ENCODE measurements at regions of chr19 and their contacts with region 1.

Region 1: DNA sequence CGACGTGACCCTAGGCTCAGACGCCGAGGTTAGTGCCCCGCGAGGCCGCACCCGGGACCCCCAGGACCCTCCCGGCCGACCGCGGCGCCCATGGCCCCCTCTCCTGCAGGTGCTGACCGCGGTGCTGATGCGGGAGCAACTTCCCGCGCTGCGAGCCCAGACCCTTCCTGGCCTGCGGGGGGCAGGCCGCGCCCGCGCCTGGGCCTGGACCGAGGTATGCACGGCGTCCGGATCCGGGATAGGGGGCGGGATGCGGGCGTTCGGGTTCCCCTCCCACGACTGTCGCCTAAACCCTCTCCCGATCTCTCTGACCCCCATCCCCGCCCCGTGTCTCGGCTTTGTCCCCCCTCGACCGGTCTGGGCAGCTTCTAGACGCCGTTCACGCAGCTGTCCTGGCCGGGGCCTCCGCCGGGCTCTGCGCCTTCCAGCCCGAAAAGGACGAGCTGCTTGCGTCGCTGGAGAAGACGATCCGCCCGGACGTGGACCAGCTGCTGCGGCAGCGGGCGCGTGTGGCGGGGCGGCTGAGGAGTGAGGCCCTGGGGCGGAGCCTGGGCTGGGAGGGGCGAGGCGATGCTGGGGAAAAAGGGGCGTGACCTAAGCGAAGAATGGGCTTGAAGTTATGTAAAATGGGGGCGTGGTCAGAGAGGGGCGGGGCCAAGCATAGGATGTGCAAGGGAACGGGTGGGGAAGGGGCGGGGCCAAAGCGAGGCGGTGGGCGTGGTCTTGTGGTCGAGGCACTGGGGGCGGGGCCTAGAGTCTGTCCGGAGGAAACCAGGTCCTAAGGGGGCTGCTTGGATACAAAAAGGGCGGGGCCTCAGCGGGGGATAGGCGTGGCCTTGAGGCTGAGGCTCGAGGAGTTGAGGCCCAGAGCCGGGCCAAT is 16.0 kb upstream of the COLGALT1 start:
- DNase-seq: peak; percentile 98 to 99
- ATAC-seq: peak; percentile 95 to 100 (median 97)
- H3K4me3 ChIP-seq: peak overlapping the region; percentile 57
- H3K4me3 Mint-ChIP-seq: peak overlapping the region; percentile 89
- H3K27ac ChIP-seq: peak overlapping the region; percentile 60
- H3K27ac Mint-ChIP-seq: peak overlapping the region; percentile 67 to 86
- H3K4me1 ChIP-seq: peaks cover 22% of the 10 kb centered on the region
- H3K4me1 Mint-ChIP-seq: peaks cover 15 to 25% of the 10 kb centered on the region in 2 donors
- H3K27me3 ChIP-seq: no peaks in the 10 kb centered on the region
- H3K27me3 Mint-ChIP-seq: no peaks in the 10 kb centered on the region
- CTCF ChIP-seq: no peak

Region 2: DNA sequence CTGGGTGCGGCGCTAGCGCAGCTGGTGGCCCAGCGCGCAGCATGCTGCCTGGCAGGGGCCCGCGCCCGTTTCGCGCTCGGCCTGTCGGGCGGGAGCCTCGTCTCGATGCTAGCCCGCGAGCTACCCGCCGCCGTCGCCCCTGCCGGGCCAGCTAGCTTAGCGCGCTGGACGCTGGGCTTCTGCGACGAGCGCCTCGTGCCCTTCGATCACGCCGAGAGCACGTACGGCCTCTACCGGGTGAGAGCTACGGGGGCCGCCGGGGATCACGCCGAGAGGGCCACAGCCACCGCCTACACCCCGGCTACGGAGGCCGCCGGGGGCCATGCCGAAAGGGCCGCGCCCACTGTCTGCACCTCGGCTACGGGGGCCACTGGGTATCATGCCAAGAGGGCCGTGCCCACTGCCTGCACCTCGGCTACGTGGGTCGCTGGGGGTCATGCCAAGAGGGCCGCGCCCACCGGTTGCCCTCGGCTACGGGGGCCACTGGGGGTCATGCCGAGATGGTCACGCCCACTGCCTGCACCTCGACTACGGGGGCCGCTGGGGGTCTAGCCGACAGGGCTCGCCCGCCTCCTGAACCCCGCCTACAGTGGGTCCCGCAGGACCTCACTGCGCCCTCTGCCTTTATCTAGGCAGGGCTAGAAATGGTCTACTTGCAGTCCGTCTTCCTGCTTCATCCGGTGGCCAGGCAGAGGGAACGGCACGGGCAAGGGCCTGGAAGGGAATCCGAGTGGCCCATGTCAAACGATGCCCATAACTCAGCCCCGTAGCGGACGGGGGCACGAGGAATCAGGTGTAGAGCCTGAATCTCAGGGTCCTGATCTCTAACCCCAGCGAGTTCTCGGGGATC is 27.5 kb before region 1 on chr19:
- intact Hi-C with region 1: loop called (anchors 1 kb)
- DNase-seq: peak; percentile 86 to 90
- ATAC-seq: peak; percentile 74 to 87 (median 76)
- H3K4me3 ChIP-seq: peak overlapping the region; percentile 72
- H3K4me3 Mint-ChIP-seq: peak overlapping the region; percentile 92
- H3K27ac ChIP-seq: peak overlapping the region; percentile 86
- H3K27ac Mint-ChIP-seq: peak overlapping the region; percentile 87 to 91
- H3K4me1 ChIP-seq: peaks cover 29% of the 10 kb centered on the region
- H3K4me1 Mint-ChIP-seq: peaks cover 21 to 25% of the 10 kb centered on the region in 2 donors
- H3K27me3 ChIP-seq: no peaks in the 10 kb centered on the region
- H3K27me3 Mint-ChIP-seq: no peaks in the 10 kb centered on the region
- CTCF ChIP-seq: no peak

Region 3: GRCh38 chr19:17522988-17523872 is 16.2 kb before region 1 on chr19:
- intact Hi-C with region 1: loop called (anchors 2 kb)
- DNase-seq: peak; percentile 34 to 63
- ATAC-seq: peak; percentile 90 to 94 (median 92)
- H3K4me3 ChIP-seq: peak overlapping the region; percentile 10
- H3K4me3 Mint-ChIP-seq: peak overlapping the region; percentile 77
- H3K27ac ChIP-seq: peak overlapping the region; percentile 80
- H3K27ac Mint-ChIP-seq: peak overlapping the region; percentile 87 to 97
- H3K4me1 ChIP-seq: peaks cover 42% of the 10 kb centered on the region
- H3K4me1 Mint-ChIP-seq: peaks cover 21 to 22% of the 10 kb centered on the region in 2 donors
- H3K27me3 ChIP-seq: no peaks in the 10 kb centered on the region
- H3K27me3 Mint-ChIP-seq: no peaks in the 10 kb centered on the region
- CTCF ChIP-seq: no peak

Region 4: GRCh38 chr19:17555480-17555928 is 16.0 kb after region 1 on chr19 and contains the start of gene COLGALT1:
- intact Hi-C with region 1: loop called (anchors 2 kb)
- DNase-seq: peak; percentile 97 to 99
- ATAC-seq: peak; percentile 99 to 100 (median 99)
- H3K4me3 ChIP-seq: peak within 1 kb of the TSS; percentile 57
- H3K4me3 Mint-ChIP-seq: peak within 1 kb of the TSS; percentile 86
- H3K27ac ChIP-seq: peak within 1 kb of the TSS; percentile 32
- H3K27ac Mint-ChIP-seq: peak within 1 kb of the TSS; percentile 61 to 79
- H3K4me1 ChIP-seq: peaks cover 18% of the 10 kb centered on the region
- H3K4me1 Mint-ChIP-seq: peaks cover 16 to 20% of the 10 kb centered on the region in 2 donors
- H3K27me3 ChIP-seq: no peaks in the 10 kb centered on the region
- H3K27me3 Mint-ChIP-seq: no peaks in the 10 kb centered on the region
- CTCF ChIP-seq: no peak
- total RNA-seq, gene COLGALT1: 39.0 to 55.4 (median 43.7) TPM